ENCODE measurements at regions of chr10 and their contacts with region 1.

Region 1: DNA sequence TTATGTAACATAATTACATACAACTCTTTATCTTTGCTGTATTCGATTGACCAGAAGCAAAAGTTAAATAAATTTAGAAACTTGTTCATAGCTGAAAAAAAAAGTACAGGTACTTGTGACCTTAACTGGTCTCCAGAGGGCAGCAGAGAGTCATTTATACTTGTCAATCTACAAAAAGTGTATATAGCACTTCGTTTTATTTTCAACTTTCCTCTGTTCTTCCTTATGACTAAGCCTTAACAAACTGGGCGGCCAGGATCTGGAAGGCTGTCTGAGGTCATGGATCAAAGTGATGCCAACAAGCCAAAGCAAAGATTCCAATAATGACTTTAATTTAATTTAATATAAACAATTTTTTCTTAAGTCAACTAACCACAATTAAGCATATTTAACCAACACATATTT is 29.8 kb downstream of the C10orf67 start:
- DNase-seq: peak; percentile 41 to 55
- H3K4me3 ChIP-seq: no peak overlapping the region
- H3K27ac ChIP-seq: no peak overlapping the region
- H3K4me1 ChIP-seq: peaks cover 12 to 16% of the 10 kb centered on the region in 2 donors
- H3K27me3 ChIP-seq: no peaks in the 10 kb centered on the region
- CTCF ChIP-seq: peak; percentile 17 to 78 (median 56)
- POLR2A ChIP-seq: no peak

Region 2: DNA sequence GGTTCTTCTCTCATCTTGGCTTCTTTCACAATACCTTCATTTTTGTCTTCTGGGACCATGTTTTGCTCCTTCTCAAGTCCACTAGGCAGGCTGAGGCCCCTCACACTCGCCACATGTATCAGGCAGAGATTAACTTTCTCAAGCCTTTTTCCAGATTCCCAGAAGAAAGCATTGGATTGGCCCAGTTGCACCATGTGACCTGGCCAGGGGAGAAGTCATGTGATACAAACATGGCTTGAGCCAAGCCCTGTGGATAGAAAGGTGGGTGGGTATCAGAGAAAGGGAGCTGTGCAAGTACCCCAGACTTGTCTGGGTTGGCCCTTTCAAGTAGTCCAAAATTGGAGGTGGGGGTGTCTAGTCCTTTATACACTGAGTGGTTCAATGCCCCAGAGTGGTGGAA is 66.5 kb after region 1 on chr10:
- intact Hi-C with region 1: no loop called
- DNase-seq: no peak
- H3K4me3 ChIP-seq: no peak overlapping the region
- H3K27ac ChIP-seq: no peak overlapping the region
- H3K4me1 ChIP-seq: no peaks in the 10 kb centered on the region
- H3K27me3 ChIP-seq: no peaks in the 10 kb centered on the region
- CTCF ChIP-seq: no peak
- POLR2A ChIP-seq: no peak

Region 3: DNA sequence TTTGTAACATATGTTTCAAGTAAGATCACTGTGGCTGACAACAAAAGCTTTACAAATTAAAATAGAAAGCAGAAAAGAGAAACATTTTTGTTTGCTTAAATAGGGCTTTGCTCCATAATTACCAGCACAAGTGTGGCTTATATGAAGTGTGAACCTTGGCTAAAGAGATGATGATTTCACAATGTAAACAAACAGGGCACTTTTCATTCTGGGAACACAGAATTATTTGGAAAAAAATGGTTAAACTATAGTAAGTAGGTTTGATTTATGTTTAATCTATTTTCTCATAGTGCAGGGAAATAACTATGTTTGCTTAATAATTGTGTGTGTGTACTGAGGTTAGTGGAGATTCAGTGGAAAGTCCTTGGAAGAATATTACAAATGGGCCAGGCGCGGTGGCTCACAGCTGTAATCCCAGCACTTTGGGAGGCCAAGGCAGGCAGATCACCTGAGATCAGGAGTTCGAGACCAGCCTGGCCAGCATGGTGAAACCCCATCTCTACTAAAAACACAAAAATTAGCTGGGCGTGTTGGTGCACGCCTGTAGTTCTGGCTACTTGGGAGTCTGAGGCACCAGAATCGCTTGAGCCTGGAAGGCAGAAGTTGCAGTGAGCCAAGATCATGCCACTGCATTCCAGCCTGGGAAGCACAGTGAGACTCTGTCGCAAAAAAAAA is 105.0 kb after region 1 on chr10:
- intact Hi-C with region 1: no loop called
- DNase-seq: peak; percentile 4 to 26
- H3K4me3 ChIP-seq: no peak overlapping the region
- H3K27ac ChIP-seq: peak overlapping the region in 2 of 3 donors; percentile 26 to 88
- H3K4me1 ChIP-seq: peaks cover 5 to 27% of the 10 kb centered on the region in 2 donors
- H3K27me3 ChIP-seq: no peaks in the 10 kb centered on the region
- CTCF ChIP-seq: no peak
- POLR2A ChIP-seq: no peak

Region 4: DNA sequence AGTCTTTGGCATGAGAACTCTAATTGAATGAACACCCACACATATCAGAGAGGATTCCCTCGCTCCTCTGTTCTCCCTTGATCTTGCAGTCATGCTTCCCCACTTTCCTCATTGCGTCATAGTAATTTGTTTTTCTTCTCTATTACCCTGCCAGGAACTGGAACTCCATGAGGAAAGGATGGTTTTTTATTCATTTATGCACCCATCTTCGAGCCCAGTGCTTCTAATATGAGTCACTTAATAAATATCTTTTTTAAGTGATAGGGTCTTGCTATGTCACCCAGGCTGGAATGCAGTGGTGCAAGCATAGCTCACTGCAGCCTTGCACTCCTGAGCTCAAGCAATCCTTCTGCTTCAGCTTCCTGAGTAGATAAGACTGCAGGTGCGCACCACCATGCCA is 207.5 kb after region 1 on chr10:
- intact Hi-C with region 1: loop called (anchors 5 kb)
- DNase-seq: no peak
- H3K4me3 ChIP-seq: no peak overlapping the region
- H3K27ac ChIP-seq: no peak overlapping the region
- H3K4me1 ChIP-seq: no peaks in the 10 kb centered on the region
- H3K27me3 ChIP-seq: no peaks in the 10 kb centered on the region
- CTCF ChIP-seq: no peak
- POLR2A ChIP-seq: no peak

Region 5: DNA sequence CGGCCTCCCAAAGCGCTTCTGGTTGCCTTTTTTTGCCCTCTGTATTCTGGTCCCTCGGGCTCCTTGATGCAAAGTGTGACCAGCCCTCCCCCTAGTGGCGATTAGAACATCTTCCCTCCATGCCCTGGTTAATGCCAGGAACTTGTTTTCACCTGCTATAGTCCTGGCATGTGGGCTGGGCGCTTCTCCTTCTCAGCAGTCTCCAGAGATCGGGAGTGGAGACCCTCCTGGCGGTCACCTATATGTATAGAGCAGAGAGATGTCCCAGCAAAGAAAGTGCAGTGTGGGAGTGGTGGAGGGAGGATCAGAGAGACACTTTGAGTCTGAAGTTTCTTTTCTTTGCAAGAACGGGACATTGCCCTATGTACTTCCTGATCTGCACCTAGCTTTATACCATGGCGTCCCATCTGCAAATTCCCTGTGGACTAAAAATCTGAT is 388.2 kb after region 1 on chr10:
- intact Hi-C with region 1: loop called (anchors 10 kb)
- DNase-seq: peak; percentile 47 to 62
- H3K4me3 ChIP-seq: no peak overlapping the region
- H3K27ac ChIP-seq: no peak overlapping the region
- H3K4me1 ChIP-seq: no peaks in the 10 kb centered on the region
- H3K27me3 ChIP-seq: no peaks in the 10 kb centered on the region
- CTCF ChIP-seq: peak; percentile 40 to 80 (median 60)
- POLR2A ChIP-seq: no peak

Measured in thyroid gland (tissue), 4 donors.